Body of pancreas (tissue), 4 donors: ENCODE measurements at regions of chr17 and their contacts with region 1.

Region 1: GRCh38 chr17:28247671-28248555 is 71.1 kb upstream of the TMEM97 start:
- DNase-seq: no peak
- ATAC-seq: no peak
- H3K4me3 ChIP-seq: no peak overlapping the region
- H3K27ac ChIP-seq: no peak overlapping the region
- H3K4me1 ChIP-seq: peaks cover 21% of the 10 kb centered on the region
- H3K27me3 ChIP-seq: no peaks in the 10 kb centered on the region
- CTCF ChIP-seq: no peak
- POLR2A ChIP-seq: no peak

Region 2: DNA sequence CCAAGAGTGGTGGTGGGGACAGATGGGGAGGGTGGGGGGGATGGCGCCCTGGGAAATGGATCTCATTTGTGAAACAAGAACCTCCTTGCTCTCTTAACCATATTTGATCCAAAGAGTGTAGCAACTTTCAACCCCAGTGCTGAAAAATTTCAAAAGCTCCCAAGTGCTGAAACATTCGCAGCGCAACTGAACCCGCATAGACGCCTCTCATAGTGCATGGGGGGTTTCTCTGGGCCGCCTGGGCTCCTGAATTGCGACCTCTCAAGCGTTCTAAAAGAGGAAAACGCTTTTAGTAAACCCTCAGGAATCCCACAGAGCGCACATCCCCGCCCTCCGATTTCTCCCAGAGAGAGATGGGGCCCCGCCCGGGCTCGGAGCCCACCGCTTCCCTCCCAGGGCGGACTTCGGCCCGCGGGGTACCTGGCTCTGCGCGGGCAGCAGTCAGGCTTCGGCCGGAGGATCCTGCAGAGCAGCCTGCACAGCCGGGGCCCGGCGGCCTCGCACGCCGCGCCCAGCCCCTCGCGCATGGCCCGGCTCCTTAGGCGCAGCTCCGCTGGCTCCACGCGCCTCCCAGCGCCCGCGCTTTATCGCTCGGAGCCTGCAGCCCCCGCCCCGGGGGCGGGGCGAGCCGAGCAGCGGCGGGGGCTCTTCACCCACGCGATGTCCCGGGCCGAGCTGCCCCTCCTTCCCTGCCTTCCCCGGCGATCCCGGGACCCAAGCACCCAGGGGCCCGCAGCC is 454.6 kb before region 1 on chr17:
- intact Hi-C with region 1: loop called (anchors 10 kb)
- DNase-seq: peak in 1 of 4 donors; percentile 30
- ATAC-seq: peak; percentile 67
- H3K4me3 ChIP-seq: no peak overlapping the region
- H3K27ac ChIP-seq: no peak overlapping the region
- H3K4me1 ChIP-seq: peaks cover 11% of the 10 kb centered on the region
- H3K27me3 ChIP-seq: peaks cover 0 to 12% of the 10 kb centered on the region in 2 donors
- CTCF ChIP-seq: no peak
- POLR2A ChIP-seq: no peak

Region 3: GRCh38 chr17:28612936-28613872 is 365.3 kb after region 1 on chr17:
- intact Hi-C with region 1: no loop called
- DNase-seq: peak; percentile 31 to 57 (median 36)
- ATAC-seq: peak; percentile 35
- H3K4me3 ChIP-seq: no peak overlapping the region
- H3K27ac ChIP-seq: no peak overlapping the region
- H3K4me1 ChIP-seq: no peaks in the 10 kb centered on the region
- H3K27me3 ChIP-seq: no peaks in the 10 kb centered on the region
- CTCF ChIP-seq: peak; percentile 44 to 58 (median 47)
- POLR2A ChIP-seq: no peak